Right cardiac atrium (tissue), 5 donors: ENCODE measurements at regions of chr11 and their contacts with region 1.

Region 1: GRCh38 chr11:122505304-122506006 is 150.1 kb upstream of the UBASH3B start:
- DNase-seq: peak; percentile 81 to 93 (median 83)
- ATAC-seq: peak; percentile 97 to 98
- H3K4me3 ChIP-seq: no peak overlapping the region
- H3K27ac ChIP-seq: no peak overlapping the region
- H3K4me1 ChIP-seq: peaks cover 2% of the 10 kb centered on the region
- H3K27me3 ChIP-seq: no peaks in the 10 kb centered on the region

Region 2: GRCh38 chr11:122038543-122038942 is 466.9 kb before region 1 on chr11:
- intact Hi-C with region 1: loop called in 1 of 4 experiments (anchors 10 kb)
- DNase-seq: no peak
- ATAC-seq: no peak
- H3K4me3 ChIP-seq: no peak overlapping the region
- H3K27ac ChIP-seq: no peak overlapping the region
- H3K4me1 ChIP-seq: no peaks in the 10 kb centered on the region
- H3K27me3 ChIP-seq: no peaks in the 10 kb centered on the region

Region 3: GRCh38 chr11:122209619-122210366 is 295.7 kb before region 1 on chr11:
- intact Hi-C with region 1: loop called in 2 of 4 experiments (anchors 5 to 10 kb)
- DNase-seq: peak; percentile 66 to 72 (median 68)
- ATAC-seq: peak; percentile 71 to 76
- H3K4me3 ChIP-seq: no peak overlapping the region
- H3K27ac ChIP-seq: peak overlapping the region; percentile 77
- H3K4me1 ChIP-seq: peaks cover 13% of the 10 kb centered on the region
- H3K27me3 ChIP-seq: no peaks in the 10 kb centered on the region

Region 4: GRCh38 chr11:122293296-122294023 is 212.0 kb before region 1 on chr11:
- intact Hi-C with region 1: loop called in 1 of 4 experiments (anchors 10 kb)
- DNase-seq: no peak
- ATAC-seq: peak; percentile 56 to 70
- H3K4me3 ChIP-seq: no peak overlapping the region
- H3K27ac ChIP-seq: no peak overlapping the region
- H3K4me1 ChIP-seq: peaks cover 4% of the 10 kb centered on the region
- H3K27me3 ChIP-seq: no peaks in the 10 kb centered on the region